Colonic mucosa (tissue), 4 donors: ENCODE measurements at regions of chr12 and their contacts with region 1.

Region 1: GRCh38 chr12:5003020-5003666 is 40.5 kb upstream of the KCNA5 start:
- DNase-seq: peak; percentile 50
- H3K4me3 ChIP-seq: no peak overlapping the region
- H3K27ac ChIP-seq: no peak overlapping the region
- H3K4me1 ChIP-seq: no peaks in the 10 kb centered on the region
- H3K27me3 ChIP-seq: no peaks in the 10 kb centered on the region
- CTCF ChIP-seq: peak; percentile 89

Region 2: DNA sequence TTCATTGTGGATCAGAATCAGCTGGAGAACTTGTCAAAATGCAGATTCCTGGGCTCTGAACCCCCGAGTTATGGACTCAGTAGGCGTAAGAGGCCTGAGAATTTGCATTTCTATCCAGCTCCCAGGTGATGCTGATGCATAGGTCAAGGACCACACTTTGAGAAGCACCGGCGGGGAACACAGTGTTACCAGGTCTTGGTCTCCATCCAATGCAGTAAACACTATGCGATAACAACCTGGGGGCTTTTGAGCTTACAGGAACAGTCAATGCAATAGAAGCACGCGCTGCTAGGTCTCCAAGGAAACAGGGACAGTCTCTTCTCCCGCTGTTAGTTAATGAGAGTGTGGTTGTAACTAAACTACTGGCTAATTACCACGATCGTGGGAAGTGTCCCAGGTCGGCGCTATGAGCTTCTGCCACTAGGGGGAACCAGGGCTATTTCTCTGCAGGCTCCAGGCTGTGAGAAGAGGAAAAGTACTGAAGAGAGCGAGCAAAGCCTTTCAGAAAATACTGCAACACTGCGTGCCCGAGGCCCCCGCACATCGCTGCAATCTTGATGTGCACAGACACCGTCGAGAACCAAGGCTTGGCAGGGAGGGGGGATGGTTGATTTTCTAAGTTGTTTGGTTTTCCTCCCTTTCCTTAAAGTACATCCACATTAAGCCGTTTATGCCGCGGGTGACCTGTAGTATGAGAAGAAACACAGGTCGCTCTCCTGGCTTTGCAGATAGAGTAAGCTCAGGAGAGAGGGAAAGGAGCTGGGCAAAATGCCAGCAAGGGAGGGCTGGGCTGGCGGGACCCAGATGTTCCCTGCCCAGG is 145.5 kb before region 1 on chr12:
- intact Hi-C with region 1: loop called (anchors 2 kb)
- DNase-seq: peak; percentile 80
- H3K4me3 ChIP-seq: peak overlapping the region; percentile 4
- H3K27ac ChIP-seq: no peak overlapping the region
- H3K4me1 ChIP-seq: peaks cover 3% of the 10 kb centered on the region
- H3K27me3 ChIP-seq: no peaks in the 10 kb centered on the region
- CTCF ChIP-seq: peak; percentile 87